SK-N-SH (cell line): ENCODE measurements at regions of chr1 and their contacts with region 1.

Region 1: DNA sequence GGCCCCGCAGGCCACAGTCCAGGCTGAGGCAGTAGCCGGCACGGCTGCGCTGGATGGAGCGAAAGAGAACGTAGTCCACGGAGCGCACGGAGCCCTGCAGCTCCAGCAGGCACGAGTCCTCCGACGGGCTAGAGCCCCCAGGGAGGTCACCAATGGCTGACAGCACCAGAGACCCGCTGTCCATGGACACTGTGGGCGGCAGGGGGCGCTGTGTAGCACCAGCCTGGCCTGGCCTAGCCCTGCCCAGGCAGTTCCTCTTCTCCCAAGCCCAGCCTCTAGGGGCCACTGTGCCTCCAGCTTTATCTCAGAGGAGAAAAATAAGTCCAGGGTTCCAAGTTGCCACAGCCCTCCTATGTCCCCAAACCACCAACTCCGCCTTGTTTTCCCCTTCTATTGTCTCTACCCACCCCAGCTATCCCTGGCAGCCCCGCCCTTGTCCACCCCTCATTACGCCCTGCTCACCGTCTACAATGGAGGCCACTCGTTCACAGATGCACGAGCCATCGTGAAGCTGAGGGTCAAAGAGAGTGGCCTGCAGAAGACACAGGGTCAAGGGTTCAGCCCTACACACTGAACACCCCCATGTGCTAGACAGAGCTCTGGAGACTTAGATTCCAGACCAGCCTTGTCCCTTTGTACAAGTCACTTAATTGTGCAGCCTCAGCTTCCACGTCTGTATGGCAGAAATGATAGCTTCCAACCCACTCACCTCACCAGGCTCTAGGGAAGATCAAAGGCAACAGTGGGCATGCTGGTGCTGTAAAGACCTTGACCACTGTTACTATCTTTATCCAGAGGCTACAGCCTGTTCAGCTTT is 4.4 kb downstream of the ENTREP3 start:
- DNase-seq: peak; percentile 98
- H3K4me3 ChIP-seq: peak overlapping the region in 1 of 2 experiments; percentile 52; a peak in 1 of 4 replicates
- H3K27ac ChIP-seq: peak overlapping the region; percentile 7 to 41; a peak in 2 of 4 replicates
- H3K4me1 ChIP-seq: peaks cover 0 to 17% of the 10 kb centered on the region in 2 experiments; a peak in 1 of 4 replicates
- H3K27me3 ChIP-seq: no peaks in the 10 kb centered on the region
- CTCF ChIP-seq: peak; percentile 99
- EP300 ChIP-seq: no peak
- RAD21 ChIP-seq: peak; percentile 90

Region 2: DNA sequence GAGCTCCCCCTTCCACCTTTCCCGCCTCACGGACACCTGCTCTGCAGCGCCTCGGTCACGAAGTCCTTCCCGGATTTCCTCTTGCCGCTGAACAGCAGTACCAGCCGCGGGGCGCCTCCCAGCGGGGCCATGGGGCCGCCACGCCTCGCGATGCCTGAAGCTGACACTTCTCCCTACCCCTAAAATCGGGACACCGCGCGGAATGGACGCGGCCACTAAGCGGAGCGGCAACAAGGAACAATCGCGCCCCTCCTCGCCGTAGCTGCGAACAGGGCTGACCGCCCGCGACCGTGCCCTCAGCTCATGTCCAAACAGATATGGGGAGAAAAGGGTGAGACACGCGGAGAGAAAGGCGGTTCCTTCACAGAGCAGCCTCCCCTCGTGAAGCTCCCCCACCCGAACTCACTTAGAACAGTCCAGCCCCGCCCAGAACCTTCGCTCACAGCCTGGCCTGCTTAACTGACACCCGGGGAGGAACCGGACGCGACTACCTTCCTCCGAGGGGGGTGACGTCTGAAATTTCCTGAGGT is 314.2 kb before region 1 on chr1 and contains the start of gene PMVK:
- CTCF ChIA-PET with region 1: no interaction called
- POLR2A ChIA-PET with region 1: no interaction called
- DNase-seq: peak; percentile 97
- H3K4me3 ChIP-seq: peak within 1 kb of the TSS; percentile 63 to 77
- H3K27ac ChIP-seq: peak within 1 kb of the TSS; percentile 94 to 95
- H3K4me1 ChIP-seq: peaks cover 20 to 28% of the 10 kb centered on the region in 2 experiments; a peak in 3 of 4 replicates
- H3K27me3 ChIP-seq: no peaks in the 10 kb centered on the region
- CTCF ChIP-seq: peak; percentile 46
- EP300 ChIP-seq: peak in 1 of 2 experiments; percentile 55; a peak in 1 of 4 replicates
- RAD21 ChIP-seq: no peak
- polyA plus RNA-seq, gene PMVK: 50.7 and 59.6 TPM in 2 replicates

Region 3: DNA sequence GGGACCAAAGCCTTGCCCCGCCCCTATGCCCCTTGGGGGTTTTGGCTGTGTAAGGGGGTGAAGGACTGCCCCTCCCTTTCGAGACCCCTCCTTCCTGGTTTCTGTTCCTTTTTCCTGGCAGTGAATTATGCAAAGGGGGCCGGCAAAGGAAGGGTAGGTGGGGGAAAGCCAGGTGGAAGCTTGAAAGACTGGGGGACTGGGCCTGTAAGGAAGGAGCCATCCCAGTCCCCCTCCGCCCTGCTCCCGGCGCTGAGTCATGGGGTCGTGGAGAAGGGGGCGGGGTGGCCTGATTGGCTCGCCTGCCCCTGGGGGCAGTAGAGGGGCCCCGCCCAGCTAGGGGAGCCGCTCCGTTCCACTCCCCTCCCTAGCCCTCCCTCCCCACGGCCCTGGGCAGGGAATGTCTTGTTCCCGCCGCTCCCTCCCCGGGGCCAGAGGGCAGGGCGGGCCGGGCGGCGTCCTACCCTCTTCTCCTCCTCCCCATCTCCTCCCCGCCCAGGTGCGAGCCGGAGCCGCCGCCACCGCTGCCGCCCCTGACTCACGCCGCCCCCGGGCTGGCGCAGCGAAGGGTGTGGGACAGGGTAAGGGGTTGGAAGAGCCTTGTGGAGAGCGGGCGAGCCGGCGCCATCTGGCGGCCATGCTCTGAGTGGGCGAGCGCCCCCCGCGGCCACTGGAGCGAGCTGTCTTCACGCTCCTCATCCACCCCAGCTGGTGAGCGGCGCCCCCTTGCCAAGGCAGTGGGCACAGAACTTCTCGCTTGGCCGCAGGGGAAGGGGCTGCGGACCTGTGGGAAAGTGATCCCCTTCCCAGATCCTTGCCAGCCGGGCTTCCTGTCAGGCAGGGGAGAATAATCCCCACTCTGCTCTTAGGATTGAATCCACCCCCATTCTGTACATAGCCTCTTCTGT is 233.5 kb before region 1 on chr1:
- CTCF ChIA-PET with region 1: no interaction called
- POLR2A ChIA-PET with region 1: no interaction called
- DNase-seq: peak; percentile 93
- H3K4me3 ChIP-seq: peak overlapping the region; percentile 20 to 51; a peak in 2 of 4 replicates
- H3K27ac ChIP-seq: no peak overlapping the region
- H3K4me1 ChIP-seq: peaks cover 0 to 6% of the 10 kb centered on the region in 2 experiments; a peak in 1 of 4 replicates
- H3K27me3 ChIP-seq: no peaks in the 10 kb centered on the region
- CTCF ChIP-seq: peak; percentile 86
- EP300 ChIP-seq: no peak
- RAD21 ChIP-seq: peak; percentile 67

Region 4: GRCh38 chr1:155029513-155030242 is 221.2 kb before region 1 on chr1:
- CTCF ChIA-PET with region 1: no interaction called
- POLR2A ChIA-PET with region 1: no interaction called
- DNase-seq: no peak
- H3K4me3 ChIP-seq: no peak overlapping the region
- H3K27ac ChIP-seq: no peak overlapping the region
- H3K4me1 ChIP-seq: no peaks in the 10 kb centered on the region
- H3K27me3 ChIP-seq: no peaks in the 10 kb centered on the region
- CTCF ChIP-seq: no peak
- EP300 ChIP-seq: no peak
- RAD21 ChIP-seq: no peak

Region 5: DNA sequence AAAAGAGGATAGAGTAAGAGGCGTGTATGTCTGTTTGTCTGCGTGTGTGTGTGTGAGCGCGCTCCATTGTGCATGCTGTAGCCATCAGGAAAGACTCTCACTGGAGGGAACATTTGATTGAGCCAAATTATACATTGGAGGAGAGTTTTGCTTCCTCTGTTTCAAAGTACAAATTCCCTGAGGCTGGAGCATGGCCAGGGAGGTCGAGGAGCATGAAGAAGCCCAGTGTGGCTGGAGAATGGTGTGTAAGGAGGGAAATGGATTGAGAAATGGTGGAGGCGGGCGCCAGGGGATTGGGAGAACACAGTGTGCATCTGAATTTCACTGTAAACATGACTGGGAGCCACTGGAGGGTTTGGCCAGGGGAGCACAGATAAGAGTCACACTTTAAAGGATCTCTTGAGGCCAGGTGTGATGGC is 145.2 kb before region 1 on chr1:
- CTCF ChIA-PET with region 1: no interaction called
- POLR2A ChIA-PET with region 1: no interaction called
- DNase-seq: no peak
- H3K4me3 ChIP-seq: no peak overlapping the region
- H3K27ac ChIP-seq: no peak overlapping the region
- H3K4me1 ChIP-seq: no peaks in the 10 kb centered on the region
- H3K27me3 ChIP-seq: no peaks in the 10 kb centered on the region; the same call in 1 of the 2 replicates
- CTCF ChIP-seq: no peak
- EP300 ChIP-seq: no peak
- RAD21 ChIP-seq: no peak

Region 6: DNA sequence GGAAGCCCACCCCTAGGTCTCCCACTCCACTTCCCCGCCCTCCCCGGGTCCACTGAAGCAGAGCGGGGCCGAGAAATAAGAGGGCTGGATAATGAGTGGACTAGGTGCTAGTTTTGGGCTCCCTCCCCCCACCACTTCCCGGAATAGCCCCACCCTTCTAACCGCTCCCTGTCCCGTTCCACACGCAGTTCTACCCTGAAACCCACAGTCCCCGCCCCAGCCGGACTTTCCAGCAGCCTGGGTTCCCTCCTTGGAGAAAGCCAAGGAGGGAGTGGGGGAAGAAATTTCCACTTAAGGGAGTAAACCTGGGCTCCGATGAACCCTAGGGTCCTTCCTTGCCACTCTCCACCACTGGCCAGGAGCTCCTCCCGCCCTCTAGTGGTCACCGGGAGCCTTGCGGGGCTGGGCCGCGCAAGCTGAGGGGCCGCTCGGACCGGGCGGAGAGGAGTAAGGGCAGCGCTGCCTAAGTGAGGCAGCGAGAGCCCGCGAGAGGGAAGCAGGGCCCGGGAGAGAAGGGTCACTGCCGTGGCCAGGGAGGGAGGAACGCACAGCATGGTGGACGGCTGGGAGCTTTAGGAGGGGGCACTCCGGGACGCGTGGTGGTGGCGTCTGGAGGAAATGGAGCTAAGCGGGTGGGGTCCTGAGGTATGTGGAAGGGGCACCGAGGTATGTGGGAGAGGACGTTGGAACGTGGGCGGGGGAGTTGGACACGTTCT is 57.4 kb before region 1 on chr1:
- CTCF ChIA-PET with region 1: interaction called, 20 read pairs
- POLR2A ChIA-PET with region 1: no interaction called
- DNase-seq: peak; percentile 94
- H3K4me3 ChIP-seq: peak overlapping the region; percentile 30 to 60
- H3K27ac ChIP-seq: peak overlapping the region; percentile 78 to 86
- H3K4me1 ChIP-seq: peaks cover 0 to 24% of the 10 kb centered on the region in 2 experiments; a peak in 2 of 4 replicates
- H3K27me3 ChIP-seq: no peaks in the 10 kb centered on the region
- CTCF ChIP-seq: peak; percentile 97
- EP300 ChIP-seq: no peak
- RAD21 ChIP-seq: peak; percentile 64

Region 7: DNA sequence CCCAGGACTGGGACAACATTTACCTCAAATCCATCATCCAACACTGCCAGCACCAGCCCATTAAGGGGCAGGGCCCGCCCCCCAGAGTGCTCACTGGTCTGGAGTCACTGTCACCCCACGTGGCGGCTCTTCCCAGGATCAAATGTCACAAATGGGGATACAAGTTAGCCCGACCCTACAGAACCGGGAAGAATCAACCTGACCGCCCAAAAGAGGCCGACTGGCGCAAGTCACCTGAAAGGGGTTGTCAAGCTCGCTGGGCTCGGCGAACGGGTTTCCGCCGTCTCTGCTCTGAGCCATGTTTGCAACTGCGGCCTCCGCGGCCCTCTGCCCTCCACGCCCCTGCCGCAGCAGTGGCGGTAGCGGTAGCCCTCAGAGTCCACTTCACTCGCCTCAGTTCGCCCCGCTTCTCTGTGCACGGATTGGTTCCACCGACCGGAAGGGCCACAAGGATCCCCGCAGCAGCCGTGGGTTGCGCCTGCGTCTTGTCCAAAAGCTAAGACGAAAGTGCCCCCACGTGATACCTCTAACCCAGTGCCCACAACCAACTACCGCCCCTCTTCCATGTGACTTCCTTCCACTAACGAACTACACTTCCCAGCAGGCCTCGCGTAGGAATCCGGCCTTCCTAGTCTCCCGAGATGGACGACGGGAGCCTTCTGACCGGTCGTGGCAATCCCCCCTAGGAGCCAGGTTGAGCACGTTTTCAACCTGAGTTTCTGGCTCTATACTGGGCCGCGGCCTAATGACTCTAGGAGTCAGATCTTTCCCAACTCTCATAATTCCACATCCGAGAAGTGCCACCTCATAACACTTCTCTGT is 11.2 kb after region 1 on chr1 and contains the start of gene SCAMP3:
- CTCF ChIA-PET with region 1: interaction called, 126 read pairs
- POLR2A ChIA-PET with region 1: interaction called, 11 read pairs
- DNase-seq: peak; percentile 95
- H3K4me3 ChIP-seq: peak within 1 kb of the TSS; percentile 93 to 94
- H3K27ac ChIP-seq: peak within 1 kb of the TSS; percentile 75 to 92
- H3K4me1 ChIP-seq: peaks cover 0 to 15% of the 10 kb centered on the region in 2 experiments; a peak in 2 of 4 replicates
- H3K27me3 ChIP-seq: no peaks in the 10 kb centered on the region
- CTCF ChIP-seq: 0 out of 2 replicates have a peak, but pooled peaks have one; percentile 1
- EP300 ChIP-seq: no peak
- RAD21 ChIP-seq: no peak
- polyA plus RNA-seq, gene SCAMP3: 193 and 225 TPM in 2 replicates

Region 8: GRCh38 chr1:155300553-155301329 is 49.9 kb after region 1 on chr1:
- CTCF ChIA-PET with region 1: interaction called, 51 read pairs
- POLR2A ChIA-PET with region 1: no interaction called
- DNase-seq: no peak
- H3K4me3 ChIP-seq: no peak overlapping the region
- H3K27ac ChIP-seq: no peak overlapping the region
- H3K4me1 ChIP-seq: no peaks in the 10 kb centered on the region
- H3K27me3 ChIP-seq: no peaks in the 10 kb centered on the region
- CTCF ChIP-seq: no peak
- EP300 ChIP-seq: no peak
- RAD21 ChIP-seq: no peak

Region 9: DNA sequence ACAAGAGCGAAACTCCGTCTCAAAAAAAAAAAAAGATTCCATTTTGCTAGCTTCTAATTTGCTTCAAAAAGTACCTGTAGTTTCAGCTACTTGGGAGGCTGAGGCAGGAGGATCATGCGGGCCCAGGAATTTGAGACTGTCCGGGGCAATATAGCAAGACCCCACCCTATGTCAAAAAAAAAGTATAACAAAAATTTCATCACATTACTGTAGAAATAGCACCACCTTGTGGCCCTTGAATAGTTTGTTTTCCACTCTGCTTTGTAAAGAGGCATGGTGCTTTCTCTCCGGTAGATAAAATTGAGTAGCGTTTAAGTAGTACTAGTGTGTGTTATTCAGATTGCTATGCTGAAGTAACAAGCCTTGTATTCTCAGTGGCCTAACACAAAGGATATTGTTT is 340.9 kb after region 1 on chr1:
- CTCF ChIA-PET with region 1: interaction called, 13 read pairs
- POLR2A ChIA-PET with region 1: no interaction called
- DNase-seq: peak; percentile 50
- H3K4me3 ChIP-seq: no peak overlapping the region; a peak in 1 of 4 replicates
- H3K27ac ChIP-seq: no peak overlapping the region
- H3K4me1 ChIP-seq: no peaks in the 10 kb centered on the region; a peak in 1 of 4 replicates
- H3K27me3 ChIP-seq: no peaks in the 10 kb centered on the region
- CTCF ChIP-seq: peak; percentile 60
- EP300 ChIP-seq: no peak
- RAD21 ChIP-seq: peak; percentile 73